MCF 10A (cell line): ENCODE measurements at regions of chr11 and their contacts with region 1.

Region 1: DNA sequence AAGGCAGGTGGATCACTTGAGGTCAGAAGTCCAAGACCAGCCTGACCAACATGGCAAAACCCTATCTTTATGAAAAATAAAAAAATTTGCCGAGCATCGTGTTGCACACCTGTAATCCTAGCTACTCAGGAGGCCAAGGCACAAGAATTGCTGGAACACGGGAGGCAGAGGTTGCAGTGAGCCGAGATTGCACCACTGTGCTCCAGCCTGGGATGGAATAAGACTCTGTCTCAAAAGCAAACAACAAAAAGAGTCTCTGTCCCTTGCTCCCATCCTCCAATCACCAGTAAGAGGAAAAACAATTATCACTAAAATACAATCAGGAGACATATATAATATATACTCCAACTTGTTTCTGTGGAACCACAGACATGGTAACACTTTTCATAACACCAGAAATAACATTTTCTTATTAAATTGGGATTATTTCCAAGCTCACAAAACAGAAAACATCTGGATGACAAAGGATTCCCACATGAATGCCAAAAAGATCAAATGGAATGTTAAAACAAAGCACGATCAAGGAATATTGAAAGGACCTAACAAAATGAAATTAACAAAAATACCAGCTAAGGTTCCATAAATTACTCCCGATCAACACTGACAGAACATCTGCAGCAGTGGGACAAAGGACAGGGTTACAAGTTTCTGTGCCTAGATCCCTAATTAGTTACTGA is 15.2 kb downstream of the FCHSD2 start:
- DNase-seq: no peak
- H3K4me3 Mint-ChIP-seq: no peak overlapping the region
- H3K27ac Mint-ChIP-seq: no peak overlapping the region
- H3K4me1 Mint-ChIP-seq: no peaks in the 10 kb centered on the region
- H3K27me3 Mint-ChIP-seq: no peaks in the 10 kb centered on the region
- CTCF ChIP-seq: no peak

Region 2: DNA sequence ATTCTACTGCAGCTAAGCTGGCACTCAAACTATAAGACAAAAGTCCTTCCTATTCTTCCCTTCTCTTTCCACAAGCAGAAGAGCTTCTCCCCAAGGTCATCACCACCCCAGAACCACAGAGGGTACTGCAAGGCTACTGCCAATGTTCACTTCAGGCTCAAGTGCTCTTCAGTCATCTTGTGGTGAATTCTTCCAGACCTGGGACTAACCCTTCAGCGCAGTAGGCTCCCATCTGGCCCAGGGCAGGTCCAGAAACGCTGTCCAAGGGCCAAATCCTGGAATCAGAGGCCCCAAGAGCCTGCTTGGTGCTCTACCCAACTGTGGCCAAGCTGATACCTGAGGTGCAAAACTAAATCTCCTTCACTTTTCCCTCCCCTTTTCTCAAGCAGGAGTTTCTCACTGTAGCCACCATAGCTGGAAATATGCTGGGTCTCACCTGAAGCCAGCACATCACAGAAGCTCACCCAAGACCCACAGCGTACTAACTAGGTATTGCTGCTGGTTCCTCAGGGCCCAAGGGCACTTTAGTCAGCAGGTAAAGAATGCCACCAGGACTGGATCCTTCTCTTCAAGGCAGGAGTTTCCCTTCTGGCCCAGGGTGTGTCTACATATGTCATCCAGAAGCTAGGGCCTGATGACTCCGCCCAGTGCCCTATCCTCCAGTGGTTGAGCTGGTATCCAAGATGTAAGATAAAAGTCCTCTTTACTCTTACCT is 12.7 kb before region 1 on chr11:
- CTCF ChIA-PET with region 1: no interaction called
- POLR2A ChIA-PET with region 1: interaction called, 16 read pairs
- intact Hi-C with region 1: no loop called
- DNase-seq: peak; percentile 36
- H3K4me3 Mint-ChIP-seq: no peak overlapping the region
- H3K27ac Mint-ChIP-seq: no peak overlapping the region
- H3K4me1 Mint-ChIP-seq: no peaks in the 10 kb centered on the region
- H3K27me3 Mint-ChIP-seq: no peaks in the 10 kb centered on the region
- CTCF ChIP-seq: no peak

Region 3: DNA sequence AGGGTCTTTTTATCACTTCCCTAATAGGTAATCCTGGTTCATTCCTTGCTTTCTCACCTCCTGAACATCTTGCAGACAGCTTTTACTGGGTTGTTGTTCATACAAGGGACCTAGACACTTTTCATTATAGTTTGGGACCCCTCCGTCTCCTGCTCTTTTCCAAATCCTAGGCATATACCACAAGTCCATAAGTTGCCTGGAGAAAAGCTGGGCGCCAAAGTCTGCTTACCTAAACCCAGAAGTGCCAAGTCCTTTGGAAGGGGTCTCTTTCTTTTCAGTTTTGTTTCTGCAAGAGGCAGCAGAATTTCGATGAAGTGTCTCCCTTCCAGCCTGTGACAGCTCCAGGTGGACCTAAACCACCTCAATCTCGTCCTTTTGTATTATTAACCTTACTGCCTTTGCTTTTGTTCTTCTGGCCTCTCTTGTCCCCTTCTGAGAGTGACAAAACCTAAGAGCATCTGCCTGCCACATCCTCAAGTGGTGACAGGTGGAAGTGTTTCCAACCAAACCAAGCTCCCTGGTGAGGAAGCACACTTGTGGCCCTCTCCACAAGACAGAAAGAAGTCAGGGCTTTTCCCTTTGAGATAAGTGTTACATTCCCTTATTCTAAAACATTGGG is 125.7 kb after region 1 on chr11:
- CTCF ChIA-PET with region 1: no interaction called
- POLR2A ChIA-PET with region 1: no interaction called
- intact Hi-C with region 1: no loop called
- DNase-seq: no peak
- H3K4me3 Mint-ChIP-seq: no peak overlapping the region
- H3K27ac Mint-ChIP-seq: no peak overlapping the region
- H3K4me1 Mint-ChIP-seq: peaks cover 14% of the 10 kb centered on the region
- H3K27me3 Mint-ChIP-seq: no peaks in the 10 kb centered on the region
- CTCF ChIP-seq: no peak